WTC11 (cell line): ENCODE measurements at regions of chr6 and their contacts with region 1.

Region 1: GRCh38 chr6:79750806-79751205 is 119.7 kb downstream of the SH3BGRL2 start:
- DNase-seq: peak; percentile 12
- ATAC-seq: peak; percentile 83
- H3K4me3 Mint-ChIP-seq: no peak overlapping the region
- H3K27ac Mint-ChIP-seq: no peak overlapping the region
- H3K4me1 Mint-ChIP-seq: peaks cover 12% of the 10 kb centered on the region
- H3K27me3 Mint-ChIP-seq: peaks cover 4% of the 10 kb centered on the region; the same call in 1 of the 2 replicates
- CTCF ChIP-seq: no peak

Region 2: DNA sequence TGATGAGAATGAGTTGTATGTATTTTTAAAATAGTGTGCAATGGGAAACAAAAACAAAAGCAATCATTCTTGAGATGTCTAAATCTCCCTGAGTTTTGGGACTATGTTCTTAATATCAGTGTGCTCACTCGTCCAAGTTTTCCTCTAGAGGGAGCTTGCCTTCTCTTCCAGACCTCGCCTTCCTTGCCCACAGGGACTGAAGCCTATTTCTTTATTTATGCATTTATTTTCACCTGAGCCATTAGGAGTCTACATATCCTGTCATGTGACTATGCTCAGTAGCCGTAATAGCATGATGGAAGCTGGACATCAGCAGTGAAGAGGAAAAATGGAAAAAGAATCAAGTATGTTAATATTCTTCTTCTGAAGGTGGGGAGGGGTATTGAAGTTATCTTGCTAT is 11.6 kb after region 1 on chr6:
- CTCF ChIA-PET with region 1: interaction called, 15 read pairs
- POLR2A ChIA-PET with region 1: no interaction called
- DNase-seq: no peak
- ATAC-seq: peak; percentile 80
- H3K4me3 Mint-ChIP-seq: no peak overlapping the region
- H3K27ac Mint-ChIP-seq: no peak overlapping the region
- H3K4me1 Mint-ChIP-seq: no peaks in the 10 kb centered on the region
- H3K27me3 Mint-ChIP-seq: no peaks in the 10 kb centered on the region
- CTCF ChIP-seq: no peak

Region 3: DNA sequence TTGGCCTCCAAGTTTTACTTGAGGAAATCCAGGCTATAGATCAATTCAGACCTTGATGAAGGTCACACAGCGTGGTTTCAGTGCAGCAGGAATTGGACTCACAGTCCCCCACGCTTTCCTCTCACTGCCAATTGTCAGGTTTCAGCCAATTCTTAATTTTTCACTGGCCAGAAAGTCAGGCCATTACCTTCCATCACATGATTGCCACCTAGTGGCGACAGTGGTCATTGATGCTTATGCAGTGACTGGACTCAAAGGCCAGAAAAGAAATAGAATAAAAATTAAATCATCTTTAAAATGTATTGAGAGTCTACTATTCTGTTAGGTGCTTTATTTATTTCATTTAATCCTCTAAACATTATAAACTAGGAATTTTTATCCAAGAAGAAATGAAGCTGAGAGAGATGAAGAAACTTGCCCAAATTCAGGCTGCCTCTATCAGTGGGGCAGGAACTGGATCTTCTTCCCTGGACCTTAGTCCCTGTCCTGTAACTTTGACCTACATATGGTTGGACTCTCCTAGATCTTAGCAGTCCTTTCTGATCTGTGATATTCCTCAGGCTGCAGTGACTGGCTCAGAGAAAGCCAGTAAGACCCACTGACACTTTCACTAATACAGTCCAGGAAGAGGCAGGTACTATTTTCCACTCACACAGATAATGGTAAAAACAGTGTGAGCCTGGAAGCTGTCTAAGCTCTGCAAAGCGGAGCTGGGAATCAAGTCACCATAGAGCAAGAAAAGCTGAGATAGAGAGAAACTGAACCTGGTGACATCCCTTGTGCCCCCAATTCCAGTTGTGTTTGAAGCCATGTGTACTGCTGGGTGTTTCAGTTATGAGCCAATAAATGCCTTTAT is 63.3 kb after region 1 on chr6:
- CTCF ChIA-PET with region 1: no interaction called
- POLR2A ChIA-PET with region 1: no interaction called
- DNase-seq: peak; percentile 85
- ATAC-seq: peak; percentile 58
- H3K4me3 Mint-ChIP-seq: no peak overlapping the region
- H3K27ac Mint-ChIP-seq: no peak overlapping the region
- H3K4me1 Mint-ChIP-seq: peaks cover 26% of the 10 kb centered on the region
- H3K27me3 Mint-ChIP-seq: no peaks in the 10 kb centered on the region
- CTCF ChIP-seq: peak; percentile 77